ENCODE measurements at regions of chr17 and their contacts with region 1.

Region 1: GRCh38 chr17:82315703-82316358 is 1.6 kb downstream of the CD7 start:
- DNase-seq: peak; percentile 66
- ATAC-seq: peak; percentile 38
- H3K4me3 Mint-ChIP-seq: peak overlapping the region; percentile 88
- H3K27ac Mint-ChIP-seq: no peak overlapping the region
- H3K4me1 Mint-ChIP-seq: peaks cover 7% of the 10 kb centered on the region
- H3K27me3 Mint-ChIP-seq: no peaks in the 10 kb centered on the region
- CTCF ChIP-seq: no peak

Region 2: DNA sequence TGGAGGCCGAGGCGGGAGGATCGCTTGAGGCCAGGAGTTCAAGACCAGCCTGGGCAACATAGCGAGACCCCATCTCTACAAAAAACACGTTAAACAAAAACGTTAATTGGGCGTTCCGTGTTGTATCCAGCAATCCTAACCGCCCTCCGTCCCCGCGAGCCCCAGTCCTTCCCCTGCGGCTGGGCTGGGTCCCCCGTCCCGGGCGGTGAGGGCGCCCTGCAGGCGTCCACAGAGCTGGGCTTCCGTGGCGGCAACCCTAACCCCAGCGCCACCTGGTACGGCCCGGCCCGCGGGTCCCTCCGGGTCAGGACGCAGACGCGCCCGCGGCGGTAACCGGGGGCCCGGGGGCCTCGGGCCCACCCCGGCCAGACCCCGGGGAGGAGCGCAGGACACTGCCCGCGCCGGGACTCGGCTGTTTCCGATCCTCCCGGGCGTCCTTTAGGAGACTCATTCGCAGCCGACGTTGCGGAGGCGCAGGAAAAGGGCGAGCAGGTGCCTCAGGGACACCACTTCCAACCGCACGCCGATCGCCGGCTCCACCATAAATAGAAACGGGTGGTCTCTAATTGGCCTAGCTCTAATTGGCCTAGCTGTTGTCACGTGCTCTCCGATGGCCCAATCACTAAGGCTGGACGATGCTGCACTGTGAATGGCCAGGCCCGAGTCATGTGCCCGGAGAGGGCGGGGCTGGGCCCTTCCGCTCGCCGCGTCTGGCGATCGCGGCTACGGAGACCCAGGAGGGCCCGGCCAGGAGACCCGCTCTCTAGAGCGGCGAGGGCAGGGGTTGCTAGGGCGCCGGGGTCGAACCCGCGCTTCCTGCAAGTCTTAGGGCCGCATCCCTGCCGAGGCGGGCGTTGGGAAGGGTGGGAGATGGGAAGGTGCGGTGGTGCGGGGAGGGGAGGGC is 23.3 kb before region 1 on chr17:
- CTCF ChIA-PET with region 1: interaction called, 68 read pairs
- POLR2A ChIA-PET with region 1: interaction called, 227 read pairs
- intact Hi-C with region 1: no loop called
- DNase-seq: peak; percentile 97
- ATAC-seq: peak; percentile 94
- H3K4me3 Mint-ChIP-seq: peak overlapping the region; percentile 73
- H3K27ac Mint-ChIP-seq: peak overlapping the region; percentile 88
- H3K4me1 Mint-ChIP-seq: peaks cover 38% of the 10 kb centered on the region
- H3K27me3 Mint-ChIP-seq: no peaks in the 10 kb centered on the region
- CTCF ChIP-seq: no peak

Measured in activated CD8-positive, alpha-beta T cell treated with anti-CD3 and anti-CD28 coated beads for 36 hours (primary cell).